OCI-LY7 (cell line): ENCODE measurements at regions of chr5 and their contacts with region 1.

Region 1: DNA sequence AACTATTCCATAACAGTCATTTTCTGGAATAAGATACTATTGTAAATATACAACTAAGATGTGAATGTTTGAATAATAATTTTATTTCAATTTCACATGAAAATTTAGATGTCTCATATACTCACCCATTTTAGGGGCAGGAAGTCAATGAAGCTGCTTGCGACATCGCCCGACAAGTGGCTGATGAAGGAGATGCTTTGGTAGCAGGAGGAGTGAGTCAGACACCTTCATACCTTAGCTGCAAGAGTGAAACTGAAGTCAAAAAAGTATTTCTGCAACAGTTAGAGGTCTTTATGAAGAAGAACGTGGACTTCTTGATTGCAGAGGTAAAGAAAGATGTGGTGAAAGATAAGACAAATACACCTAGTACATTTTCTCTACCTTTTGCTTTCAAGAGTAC is 8.6 kb downstream of the BHMT start:
- DNase-seq: no peak
- H3K4me3 ChIP-seq: no peak overlapping the region
- H3K27ac ChIP-seq: no peak overlapping the region
- H3K4me1 ChIP-seq: no peaks in the 10 kb centered on the region
- CTCF ChIP-seq: no peak

Region 2: DNA sequence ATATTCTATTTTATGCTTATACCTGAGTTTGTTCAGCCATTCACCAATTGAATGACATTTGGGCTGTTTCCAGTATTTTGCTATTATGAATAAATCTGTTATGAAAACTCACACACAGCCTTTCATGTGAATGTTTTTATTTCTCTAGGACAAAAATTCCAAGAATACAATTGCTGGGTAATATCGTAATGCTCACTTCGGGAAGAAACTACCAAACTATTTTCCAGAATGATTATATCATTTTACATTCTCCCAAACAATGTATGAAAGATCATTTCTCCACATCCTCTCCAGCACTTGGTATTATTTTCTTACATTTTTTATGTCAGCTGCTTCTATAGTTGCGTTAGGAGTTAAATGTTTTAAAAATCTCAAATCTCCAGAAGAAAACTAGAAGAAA is 413.4 kb before region 1 on chr5:
- CTCF ChIA-PET with region 1: no interaction called
- POLR2A ChIA-PET with region 1: no interaction called
- intact Hi-C with region 1: no loop called
- DNase-seq: no peak
- H3K4me3 ChIP-seq: no peak overlapping the region
- H3K27ac ChIP-seq: no peak overlapping the region
- H3K4me1 ChIP-seq: peaks cover 13% of the 10 kb centered on the region
- CTCF ChIP-seq: no peak

Region 3: GRCh38 chr5:79181419-79182022 is 61.3 kb after region 1 on chr5:
- CTCF ChIA-PET with region 1: no interaction called
- POLR2A ChIA-PET with region 1: no interaction called
- intact Hi-C with region 1: no loop called
- DNase-seq: no peak
- H3K4me3 ChIP-seq: no peak overlapping the region
- H3K27ac ChIP-seq: no peak overlapping the region
- H3K4me1 ChIP-seq: no peaks in the 10 kb centered on the region
- CTCF ChIP-seq: no peak

Region 4: DNA sequence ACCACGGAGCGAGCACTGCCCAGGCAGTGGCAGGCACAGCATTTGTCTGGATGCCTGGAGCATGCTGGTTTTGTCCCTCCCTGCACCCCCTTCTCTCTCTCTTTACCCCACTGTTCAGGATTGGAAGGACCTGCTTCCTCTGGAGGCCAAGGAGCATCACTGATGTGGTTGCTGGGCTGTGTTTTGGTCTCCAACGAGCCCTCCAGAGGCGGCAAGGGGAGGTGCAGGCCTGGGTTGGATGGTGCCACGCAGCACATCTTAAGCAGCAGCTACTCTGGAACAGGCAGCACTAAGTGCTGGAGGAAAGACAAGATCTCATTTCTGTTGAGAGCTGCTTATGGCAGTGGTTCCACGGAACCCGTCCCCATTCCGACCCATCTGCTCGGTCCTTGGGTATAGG is 709.0 kb after region 1 on chr5:
- CTCF ChIA-PET with region 1: no interaction called
- POLR2A ChIA-PET with region 1: interaction called, 10 read pairs
- intact Hi-C with region 1: no loop called
- DNase-seq: peak; percentile 14
- H3K4me3 ChIP-seq: no peak overlapping the region
- H3K27ac ChIP-seq: no peak overlapping the region
- H3K4me1 ChIP-seq: no peaks in the 10 kb centered on the region
- CTCF ChIP-seq: peak; percentile 61